Activated T-helper 2 cell treated with anti-CD3 and anti-CD28 coated beads, Interferon-gamma antibody, Interleukin-2, Interleukin-4, amounts not matched to agents 10 μg/mL and 5 μg/mL and 100 μg/mL, durations not matched to agents 14 hours and 24 hours and 36 hours (primary cell): ENCODE measurements at regions of chr16 and their contacts with region 1.

Region 1: DNA sequence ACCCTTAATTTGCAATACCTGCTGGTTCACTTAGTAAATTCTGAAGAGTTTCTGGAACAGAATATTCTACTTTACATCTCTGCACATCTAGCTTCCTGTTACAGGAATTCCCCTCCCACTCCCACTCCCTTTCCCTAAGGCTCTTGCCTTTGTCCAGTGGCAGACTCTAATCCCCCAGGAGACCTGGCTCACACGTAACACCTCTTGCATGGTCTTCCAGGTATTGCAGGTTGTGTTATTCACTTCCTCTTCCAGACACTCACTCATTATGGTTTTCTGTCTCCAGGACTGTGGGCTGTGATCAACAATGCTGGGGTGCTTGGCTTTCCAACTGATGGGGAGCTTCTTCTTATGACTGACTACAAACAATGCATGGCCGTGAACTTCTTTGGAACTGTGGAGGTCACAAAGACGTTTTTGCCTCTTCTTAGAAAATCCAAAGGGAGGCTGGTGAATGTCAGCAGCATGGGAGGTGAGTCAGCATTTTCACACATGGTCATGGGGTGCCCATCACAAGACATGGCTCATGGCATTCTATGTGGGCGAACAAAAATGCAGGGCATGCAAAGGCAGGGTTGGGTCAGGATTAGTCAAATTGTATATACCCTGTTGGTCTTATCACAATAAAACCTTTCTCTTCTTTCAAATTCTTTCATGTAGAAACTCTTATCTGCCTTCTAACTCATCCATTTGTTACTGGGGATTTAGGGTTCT is 35.8 kb downstream of the HSD17B2 start:
- DNase-seq: no peak
- H3K4me3 Mint-ChIP-seq: no peak overlapping the region
- H3K27ac Mint-ChIP-seq: no peak overlapping the region
- H3K4me1 Mint-ChIP-seq: peaks cover 27% of the 10 kb centered on the region
- H3K27me3 Mint-ChIP-seq: peaks cover 2% of the 10 kb centered on the region

Region 2: GRCh38 chr16:82082543-82083244 is 11.9 kb after region 1 on chr16:
- intact Hi-C with region 1: loop called (anchors 1 kb)
- DNase-seq: no peak
- H3K4me3 Mint-ChIP-seq: no peak overlapping the region
- H3K27ac Mint-ChIP-seq: no peak overlapping the region
- H3K4me1 Mint-ChIP-seq: peaks cover 11% of the 10 kb centered on the region
- H3K27me3 Mint-ChIP-seq: peaks cover 28% of the 10 kb centered on the region

Region 3: GRCh38 chr16:82136956-82137821 is 66.4 kb after region 1 on chr16:
- intact Hi-C with region 1: loop called (anchors 5 kb)
- DNase-seq: no peak
- H3K4me3 Mint-ChIP-seq: no peak overlapping the region
- H3K27ac Mint-ChIP-seq: no peak overlapping the region
- H3K4me1 Mint-ChIP-seq: peaks cover 20% of the 10 kb centered on the region
- H3K27me3 Mint-ChIP-seq: no peaks in the 10 kb centered on the region